ENCODE measurements at regions of chr2 and their contacts with region 1.

Region 1: DNA sequence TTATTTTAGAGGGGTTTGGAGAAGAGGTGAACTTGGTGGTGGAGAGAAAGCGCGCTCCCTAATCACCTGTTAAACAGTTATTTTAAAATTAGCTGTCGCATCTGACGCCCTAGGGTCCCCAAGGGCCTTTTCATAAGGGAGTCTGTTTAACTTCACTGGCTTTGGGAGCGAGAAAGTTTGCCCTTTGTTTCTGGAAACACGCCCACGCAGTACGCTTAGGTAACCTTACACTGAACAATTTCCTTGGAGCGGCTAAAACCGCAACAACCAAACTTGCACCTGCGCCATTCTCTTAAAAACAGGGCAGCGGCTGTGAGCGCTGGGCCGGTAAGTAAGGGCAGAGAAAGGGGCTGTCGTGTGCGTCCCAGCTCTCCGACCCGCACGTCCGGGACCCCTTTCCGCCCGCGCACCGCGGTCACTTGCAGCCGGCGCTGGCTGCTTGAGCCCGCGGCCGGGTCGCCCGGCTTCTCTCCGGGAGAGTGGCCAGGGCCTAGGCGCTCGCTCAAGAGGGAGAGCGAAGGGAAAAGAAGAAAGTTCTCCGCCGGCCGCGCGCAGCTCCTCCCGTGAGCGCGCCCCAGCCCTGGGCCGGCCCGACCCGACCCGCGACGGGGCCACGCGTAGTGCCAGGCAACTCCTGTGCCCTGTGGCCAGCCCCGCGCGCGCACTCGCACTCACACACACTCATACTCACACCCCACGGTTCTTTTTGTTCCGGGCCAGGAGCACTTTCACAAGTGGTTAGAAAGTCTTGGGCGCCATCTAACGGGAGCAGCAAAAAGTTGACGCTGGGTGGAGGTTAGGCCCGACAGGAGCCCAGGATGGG is 19.2 kb downstream of the POU3F3 start:
- DNase-seq: peak; percentile 83 to 98 (median 87)

Region 2: DNA sequence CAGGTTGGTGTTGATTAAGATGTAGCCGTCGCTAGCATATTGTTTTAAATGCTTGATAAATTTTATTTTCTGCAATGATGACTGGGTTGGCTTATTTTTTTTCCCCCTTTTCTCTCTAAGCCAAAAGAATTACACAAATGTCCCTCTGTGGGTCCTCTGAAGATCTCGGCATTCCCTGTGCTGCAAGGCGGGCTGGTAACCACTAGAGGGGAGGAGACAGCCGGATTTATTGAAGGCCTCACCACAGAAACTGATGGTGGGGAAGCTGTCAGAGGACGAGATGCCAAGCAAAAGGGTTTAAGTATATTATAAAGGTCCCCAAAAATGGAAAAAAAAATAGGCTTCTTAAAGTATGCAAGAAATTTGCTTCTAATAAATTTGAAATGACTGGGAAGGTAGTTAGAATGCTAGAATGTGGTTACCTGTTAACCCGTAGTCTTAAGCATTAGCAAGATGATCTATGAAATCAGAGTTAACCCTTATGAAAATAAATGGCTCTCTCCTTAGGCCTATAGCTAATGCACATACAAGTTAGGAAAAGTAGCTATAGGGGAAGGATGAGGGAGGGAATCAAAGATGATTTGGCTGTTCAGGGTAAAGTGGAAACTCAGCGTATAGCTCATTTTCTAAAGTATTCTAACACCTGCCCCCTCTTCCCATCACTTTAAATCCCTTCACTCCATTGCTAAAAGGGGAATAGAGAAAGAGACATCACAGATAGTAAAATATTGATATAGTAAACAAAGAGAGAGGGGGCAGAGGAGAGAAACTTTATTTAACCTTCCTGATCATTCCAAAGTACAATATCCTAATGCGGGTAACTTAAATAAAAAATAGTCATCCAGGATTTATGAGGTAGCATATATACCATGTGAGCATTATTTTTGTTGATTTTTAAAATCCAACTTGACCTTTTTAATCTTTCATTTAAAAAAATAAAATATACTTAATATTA is 913.6 kb before region 1 on chr2:
- intact Hi-C with region 1: loop called (anchors 10 kb)
- DNase-seq: peak; percentile 45 to 96 (median 68)

Region 3: GRCh38 chr2:104043864-104044263 is 829.2 kb before region 1 on chr2:
- intact Hi-C with region 1: loop called (anchors 10 kb)
- DNase-seq: peak in 4 of 10 donors; percentile 10 to 86 (median 49)

Region 4: DNA sequence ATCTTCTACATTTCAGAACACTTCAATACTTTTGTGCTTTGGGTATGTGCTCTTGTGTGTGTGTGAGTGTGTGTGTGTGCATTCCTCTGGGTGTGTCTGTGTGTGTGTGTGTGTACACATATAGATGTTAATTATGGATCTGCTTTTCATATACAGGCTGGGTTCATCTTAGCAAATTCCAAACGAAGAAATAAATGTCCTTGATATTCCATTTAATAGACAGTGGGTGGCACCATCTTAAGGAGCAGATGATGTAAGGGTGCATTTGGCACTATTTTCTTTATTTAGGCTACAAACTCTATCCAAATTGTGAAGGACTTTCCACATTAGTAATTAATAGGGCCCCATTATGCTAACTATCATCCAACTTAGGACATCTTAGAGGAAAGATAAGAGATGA is 444.9 kb before region 1 on chr2:
- intact Hi-C with region 1: loop called (anchors 10 kb)
- DNase-seq: no peak

Region 5: GRCh38 chr2:104502901-104503300 is 370.2 kb before region 1 on chr2:
- intact Hi-C with region 1: loop called (anchors 10 kb)
- DNase-seq: peak; percentile 74 to 97 (median 86)

Measured in posterior cingulate gyrus (tissue), 11 donors.